ENCODE measurements at regions of chr9 and their contacts with region 1.

Region 1: DNA sequence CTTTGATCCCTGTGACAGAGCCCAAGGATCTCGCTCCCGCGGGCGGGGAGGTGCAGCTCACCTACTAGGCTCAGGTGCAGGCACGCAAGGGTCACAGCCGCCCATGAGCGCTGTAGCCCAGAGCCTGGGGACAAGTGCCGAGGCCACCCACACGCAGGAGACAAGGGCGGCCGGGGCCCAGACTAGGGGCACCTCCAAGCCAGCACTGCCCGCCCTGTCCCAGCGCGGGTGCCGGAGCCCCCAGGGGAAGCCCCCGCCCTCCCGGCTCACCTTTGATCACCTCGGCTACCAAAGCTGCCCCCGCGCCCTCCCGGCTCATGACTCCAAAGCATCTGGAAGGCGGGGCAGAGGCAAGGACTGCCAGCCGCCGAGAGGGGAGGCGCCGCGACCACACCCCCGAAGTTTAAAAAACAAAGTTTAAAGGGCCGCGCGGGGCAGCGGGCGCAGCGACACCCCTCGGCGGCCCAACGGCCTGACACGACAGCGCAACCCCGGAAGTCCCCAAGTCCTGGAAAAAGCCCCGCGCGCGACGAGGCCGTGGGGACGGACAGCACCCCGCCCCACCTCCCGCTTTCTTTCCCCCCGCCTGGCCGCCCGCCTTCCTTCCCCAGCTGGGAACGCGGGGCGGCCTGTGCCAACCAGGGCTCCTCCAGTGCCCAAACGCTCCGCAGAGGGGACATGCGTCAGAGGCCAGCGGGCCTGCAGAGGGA is 53.0 kb downstream of the CDC14B start:
- DNase-seq: peak; percentile 91
- H3K4me3 ChIP-seq: peak overlapping the region; percentile 76
- H3K27ac ChIP-seq: peak overlapping the region; percentile 94
- H3K4me1 ChIP-seq: peaks cover 5% of the 10 kb centered on the region
- H3K27me3 ChIP-seq: no peaks in the 10 kb centered on the region
- CTCF ChIP-seq: peak; percentile 67

Region 2: GRCh38 chr9:96619491-96620154 is 53.0 kb after region 1 on chr9 and contains the start of gene CDC14B:
- intact Hi-C with region 1: loop called (anchors 10 kb)
- DNase-seq: peak; percentile 96
- H3K4me3 ChIP-seq: peak within 1 kb of the TSS; percentile 79
- H3K27ac ChIP-seq: peak within 1 kb of the TSS; percentile 37
- H3K4me1 ChIP-seq: no peaks in the 10 kb centered on the region
- H3K27me3 ChIP-seq: no peaks in the 10 kb centered on the region
- CTCF ChIP-seq: no peak
- total RNA-seq, gene CDC14B: 12.7 to 17.3 TPM